Activated CD8-positive, alpha-beta T cell treated with anti-CD3 and anti-CD28 coated beads for 36 hours (primary cell): ENCODE measurements at regions of chr16 and their contacts with region 1.

Region 1: DNA sequence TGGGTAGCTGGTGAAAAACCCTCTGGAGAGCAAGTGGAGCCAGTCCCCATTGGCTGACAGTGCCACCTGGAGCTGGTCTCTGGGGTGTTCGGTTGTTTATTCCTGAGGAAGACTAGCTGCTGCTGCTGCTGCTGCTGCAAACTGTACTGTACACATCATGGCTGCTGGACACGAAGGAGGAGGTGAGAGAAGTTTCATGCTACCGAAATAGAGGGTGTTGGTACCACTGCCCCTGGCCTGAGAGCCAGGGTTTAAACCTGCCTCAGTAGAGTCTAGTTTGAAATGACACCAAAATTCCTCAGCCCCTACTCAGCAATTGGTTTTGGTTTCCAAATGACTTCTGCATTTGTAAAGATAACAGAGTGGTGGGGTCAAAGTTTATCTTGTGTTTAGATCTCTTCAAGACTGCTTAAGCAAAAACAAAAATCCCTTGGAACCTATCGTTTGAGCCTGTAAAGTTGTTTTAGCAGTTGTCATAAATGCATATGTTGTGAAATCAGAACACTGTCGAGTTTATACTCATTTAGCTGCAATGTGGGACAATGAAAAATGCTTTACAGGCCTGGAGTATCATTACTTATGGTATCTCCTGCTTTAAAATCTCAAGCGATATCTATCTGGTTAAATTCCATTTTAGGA is 40.8 kb downstream of the CYB5B start:
- DNase-seq: peak; percentile 29
- ATAC-seq: peak; percentile 55
- H3K4me3 Mint-ChIP-seq: no peak overlapping the region
- H3K27ac Mint-ChIP-seq: peak overlapping the region; percentile 79
- H3K4me1 Mint-ChIP-seq: peaks cover 60% of the 10 kb centered on the region
- H3K27me3 Mint-ChIP-seq: no peaks in the 10 kb centered on the region
- CTCF ChIP-seq: no peak

Region 2: GRCh38 chr16:69073161-69073669 is 392.0 kb before region 1 on chr16:
- CTCF ChIA-PET with region 1: no interaction called
- POLR2A ChIA-PET with region 1: no interaction called
- intact Hi-C with region 1: no loop called
- DNase-seq: no peak
- ATAC-seq: no peak
- H3K4me3 Mint-ChIP-seq: no peak overlapping the region
- H3K27ac Mint-ChIP-seq: no peak overlapping the region
- H3K4me1 Mint-ChIP-seq: no peaks in the 10 kb centered on the region
- H3K27me3 Mint-ChIP-seq: no peaks in the 10 kb centered on the region
- CTCF ChIP-seq: no peak

Region 3: GRCh38 chr16:69432069-69432468 is 33.1 kb before region 1 on chr16:
- CTCF ChIA-PET with region 1: no interaction called
- POLR2A ChIA-PET with region 1: no interaction called
- intact Hi-C with region 1: loop called (anchors 5 kb)
- DNase-seq: no peak
- ATAC-seq: peak; percentile 35
- H3K4me3 Mint-ChIP-seq: no peak overlapping the region
- H3K27ac Mint-ChIP-seq: peak overlapping the region; percentile 21
- H3K4me1 Mint-ChIP-seq: peaks cover 60% of the 10 kb centered on the region
- H3K27me3 Mint-ChIP-seq: no peaks in the 10 kb centered on the region
- CTCF ChIP-seq: no peak

Region 4: GRCh38 chr16:69535123-69536050 is 70.2 kb after region 1 on chr16:
- CTCF ChIA-PET with region 1: no interaction called
- POLR2A ChIA-PET with region 1: no interaction called
- intact Hi-C with region 1: no loop called
- DNase-seq: no peak
- ATAC-seq: no peak
- H3K4me3 Mint-ChIP-seq: no peak overlapping the region
- H3K27ac Mint-ChIP-seq: no peak overlapping the region
- H3K4me1 Mint-ChIP-seq: peaks cover 35% of the 10 kb centered on the region
- H3K27me3 Mint-ChIP-seq: no peaks in the 10 kb centered on the region
- CTCF ChIP-seq: no peak